Dorsolateral prefrontal cortex (tissue), 120 donors: ENCODE measurements at regions of chr19 and their contacts with region 1.

Region 1: GRCh38 chr19:38315657-38316476 is at the start of gene YIF1B:
- DNase-seq: peak; percentile 88 to 99 (median 98)
- H3K4me3 ChIP-seq: peak within 1 kb of the TSS; percentile 58 to 94 (median 81)
- H3K27ac ChIP-seq: peak within 1 kb of the TSS; percentile 53 to 96 (median 90)
- H3K27me3 ChIP-seq: no peaks in the 10 kb centered on the region
- CTCF ChIP-seq: peak in 30 of 56 donors; percentile 5 to 56 (median 28)
- total RNA-seq, gene YIF1B: 31.5 to 70.0 (median 48.6) TPM

Region 2: DNA sequence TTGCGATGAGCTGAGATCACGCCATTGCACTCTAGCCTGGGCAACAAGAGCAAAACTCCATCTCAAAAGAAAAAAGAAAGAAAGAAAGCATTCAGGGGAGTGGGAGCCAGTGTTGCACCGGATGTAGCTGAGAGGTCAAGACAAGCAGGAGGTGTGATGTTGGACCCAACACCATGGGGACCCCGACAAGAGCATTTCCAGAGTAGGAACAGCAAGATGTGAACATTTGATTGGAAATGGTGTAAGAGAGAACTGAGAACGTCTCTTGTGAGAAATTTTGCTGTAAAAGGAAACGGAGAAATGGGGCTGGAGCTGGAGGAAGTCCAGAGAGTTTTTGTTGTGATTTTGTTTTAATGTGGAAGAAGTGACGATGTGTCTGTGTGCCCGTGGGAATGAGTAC is 76.1 kb before region 1 on chr19:
- intact Hi-C with region 1: loop called (anchors 5 kb)
- DNase-seq: no peak
- H3K4me3 ChIP-seq: no peak overlapping the region
- H3K27ac ChIP-seq: peak overlapping the region in 1 of 59 donors; percentile 39
- H3K27me3 ChIP-seq: no peaks in the 10 kb centered on the region
- CTCF ChIP-seq: no peak

Region 3: GRCh38 chr19:38255383-38256014 is 60.4 kb before region 1 on chr19:
- intact Hi-C with region 1: loop called in 1 of 2 experiments (anchors 5 kb)
- DNase-seq: peak in 4 of 10 donors; percentile 34 to 71 (median 56)
- H3K4me3 ChIP-seq: peak overlapping the region; percentile 36 to 90 (median 72)
- H3K27ac ChIP-seq: peak overlapping the region; percentile 77 to 100 (median 99)
- H3K27me3 ChIP-seq: peaks cover 0 to 19% (median 7%) of the 10 kb centered on the region in 45 donors
- CTCF ChIP-seq: no peak

Region 4: DNA sequence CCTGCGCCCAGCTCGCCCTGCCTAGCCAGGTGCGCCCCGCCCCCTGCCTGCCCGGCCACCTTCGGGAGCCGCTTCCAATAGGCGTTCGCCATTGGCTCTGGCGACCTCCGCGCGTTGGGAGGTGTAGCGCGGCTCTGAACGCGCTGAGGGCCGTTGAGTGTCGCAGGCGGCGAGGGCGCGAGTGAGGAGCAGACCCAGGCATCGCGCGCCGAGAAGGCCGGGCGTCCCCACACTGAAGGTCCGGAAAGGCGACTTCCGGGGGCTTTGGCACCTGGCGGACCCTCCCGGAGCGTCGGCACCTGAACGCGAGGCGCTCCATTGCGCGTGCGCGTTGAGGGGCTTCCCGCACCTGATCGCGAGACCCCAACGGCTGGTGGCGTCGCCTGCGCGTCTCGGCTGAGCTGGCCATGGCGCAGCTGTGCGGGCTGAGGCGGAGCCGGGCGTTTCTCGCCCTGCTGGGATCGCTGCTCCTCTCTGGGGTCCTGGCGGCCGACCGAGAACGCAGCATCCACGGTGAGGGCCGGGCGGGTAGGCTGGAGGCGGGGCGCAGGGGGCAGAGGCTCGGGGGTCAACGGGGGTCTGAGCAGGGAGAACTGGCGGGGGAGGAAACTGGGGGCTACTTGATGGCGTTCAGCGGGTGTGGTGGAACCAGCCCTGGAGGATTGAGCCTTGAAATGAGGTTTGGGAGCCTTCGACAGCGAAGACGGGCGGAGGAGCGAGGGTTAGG is 51.2 kb before region 1 on chr19 and contains the start of gene SPINT2:
- intact Hi-C with region 1: loop called (anchors 5 kb)
- DNase-seq: peak in 5 of 10 donors; percentile 24 to 54 (median 50)
- H3K4me3 ChIP-seq: peak within 1 kb of the TSS; percentile 45 to 86 (median 71)
- H3K27ac ChIP-seq: peak within 1 kb of the TSS; percentile 7 to 98 (median 89)
- H3K27me3 ChIP-seq: no peaks in the 10 kb centered on the region
- CTCF ChIP-seq: no peak
- total RNA-seq, gene SPINT2: 41.9 to 135 (median 92.4) TPM